Activated T-helper 1 cell treated with anti-CD3 and anti-CD28 coated beads, Interleukin-12 subunit alpha, Interleukin-12 subunit beta, Interleukin-2, Interleukin-4 antibody, amounts not matched to agents 30 ng/mL and 10 ng/mL and 1 ng/mL, durations not matched to agents 14 hours and 24 hours and 36 hours (primary cell): ENCODE measurements at regions of chr3 and their contacts with region 1.

Region 1: DNA sequence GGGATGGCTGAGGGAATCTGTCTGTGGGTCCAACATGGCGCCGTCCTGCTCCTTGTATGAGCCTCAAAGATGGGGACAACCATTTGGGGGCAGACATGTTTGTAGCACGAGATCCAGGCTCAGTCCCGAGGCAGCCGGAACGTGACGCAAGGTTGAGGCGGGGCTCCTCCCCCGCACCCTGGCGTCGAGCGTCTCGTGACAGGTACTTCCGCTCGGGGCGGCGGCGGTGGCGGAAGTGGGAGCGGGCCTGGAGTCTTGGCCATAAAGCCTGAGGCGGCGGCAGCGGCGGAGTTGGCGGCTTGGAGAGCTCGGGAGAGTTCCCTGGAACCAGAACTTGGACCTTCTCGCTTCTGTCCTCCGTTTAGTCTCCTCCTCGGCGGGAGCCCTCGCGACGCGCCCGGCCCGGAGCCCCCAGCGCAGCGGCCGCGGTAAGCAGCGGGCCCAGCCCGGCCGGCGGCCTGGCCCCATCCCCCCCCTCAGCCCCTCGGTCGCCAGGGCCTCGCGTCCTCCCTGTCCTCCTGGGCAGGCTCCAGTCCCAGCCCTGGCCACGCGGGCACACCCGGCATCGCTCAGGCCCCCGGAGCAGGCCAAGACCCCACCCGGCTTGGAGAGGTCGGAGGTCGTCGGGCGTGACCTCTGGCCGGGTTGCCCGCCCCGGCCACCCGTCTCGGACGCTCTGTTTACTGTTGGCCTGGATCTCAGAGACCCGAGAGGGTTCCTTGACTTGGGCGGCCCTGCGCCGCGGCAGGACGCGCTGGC is at the start of gene RAB7A:
- DNase-seq: peak; percentile 94
- H3K4me3 Mint-ChIP-seq: peak within 1 kb of the TSS; percentile 99
- H3K27ac Mint-ChIP-seq: peak within 1 kb of the TSS; percentile 93
- H3K4me1 Mint-ChIP-seq: peaks cover 56% of the 10 kb centered on the region
- H3K27me3 Mint-ChIP-seq: no peaks in the 10 kb centered on the region
- total RNA-seq, gene RAB7A: 318 and 329 TPM in 2 replicates

Region 2: DNA sequence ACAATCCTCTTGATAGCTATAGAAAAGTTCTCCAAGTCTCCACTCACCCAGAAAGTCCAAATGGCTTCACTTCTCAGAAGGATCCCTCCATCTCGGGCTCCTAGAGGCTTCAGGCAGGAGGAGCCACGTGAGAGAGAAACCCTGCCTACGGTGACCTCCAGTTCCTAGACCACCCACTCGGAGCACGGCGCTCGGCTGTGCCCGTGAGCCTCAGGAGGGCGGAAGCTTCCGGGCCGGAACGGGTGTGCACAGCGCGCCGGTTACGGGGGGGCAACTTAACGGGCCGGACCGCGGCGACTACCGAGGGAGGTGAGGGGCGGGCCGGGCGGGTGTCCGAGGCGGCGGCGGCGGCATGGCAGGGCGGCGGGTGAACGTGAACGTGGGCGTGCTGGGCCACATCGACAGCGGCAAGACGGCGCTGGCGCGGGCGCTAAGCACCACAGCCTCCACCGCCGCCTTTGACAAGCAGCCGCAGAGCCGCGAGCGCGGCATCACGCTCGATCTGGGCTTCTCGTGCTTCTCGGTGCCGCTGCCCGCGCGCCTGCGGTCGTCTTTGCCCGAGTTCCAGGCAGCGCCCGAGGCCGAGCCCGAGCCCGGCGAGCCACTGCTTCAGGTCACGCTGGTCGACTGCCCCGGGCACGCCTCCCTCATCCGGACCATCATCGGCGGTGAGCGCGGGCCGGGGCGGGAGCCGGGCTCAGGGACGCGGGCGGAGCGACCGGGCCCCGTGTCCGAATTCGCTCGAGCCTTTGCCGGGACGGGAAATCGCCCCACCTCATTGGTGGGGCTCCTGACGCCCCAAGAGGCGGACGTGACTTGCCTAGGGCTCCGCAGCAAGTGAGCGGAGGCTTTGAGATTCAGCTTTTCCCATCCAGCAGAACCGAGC is 572.7 kb before region 1 on chr3 and contains the start of gene EEFSEC:
- intact Hi-C with region 1: loop called (anchors 5 kb)
- DNase-seq: peak; percentile 82
- H3K4me3 Mint-ChIP-seq: peak within 1 kb of the TSS; percentile 94
- H3K27ac Mint-ChIP-seq: peak within 1 kb of the TSS; percentile 98
- H3K4me1 Mint-ChIP-seq: peaks cover 31% of the 10 kb centered on the region
- H3K27me3 Mint-ChIP-seq: peaks cover 3% of the 10 kb centered on the region
- total RNA-seq, gene EEFSEC: 18.7 and 19.5 TPM in 2 replicates

Region 3: GRCh38 chr3:128680602-128681368 is 45.3 kb before region 1 on chr3:
- intact Hi-C with region 1: loop called (anchors 1 kb)
- DNase-seq: peak; percentile 96
- H3K4me3 Mint-ChIP-seq: peak overlapping the region; percentile 85
- H3K27ac Mint-ChIP-seq: peak overlapping the region; percentile 89
- H3K4me1 Mint-ChIP-seq: peaks cover 29% of the 10 kb centered on the region
- H3K27me3 Mint-ChIP-seq: no peaks in the 10 kb centered on the region

Region 4: DNA sequence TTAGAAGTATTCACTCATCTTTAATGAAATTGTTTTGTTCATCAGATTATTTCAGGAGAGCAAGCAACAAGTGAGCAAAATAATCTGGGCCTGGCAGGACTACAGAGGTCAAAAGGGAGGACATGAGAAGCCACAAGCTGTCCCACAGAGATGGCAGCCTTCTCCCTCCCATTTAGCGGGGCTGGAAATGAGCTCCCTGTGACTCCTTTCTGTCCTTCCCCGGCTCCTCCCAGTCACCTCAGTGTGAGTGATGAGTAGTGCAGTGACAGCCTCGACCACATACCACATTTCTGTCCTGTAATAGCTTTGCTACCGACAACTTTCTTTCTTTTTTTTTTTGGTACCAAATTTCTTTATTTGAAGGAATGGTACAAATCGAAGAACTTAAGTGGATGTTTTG is 37.9 kb after region 1 on chr3:
- intact Hi-C with region 1: loop called (anchors 5 kb)
- DNase-seq: no peak
- H3K4me3 Mint-ChIP-seq: no peak overlapping the region
- H3K27ac Mint-ChIP-seq: peak overlapping the region; percentile 18
- H3K4me1 Mint-ChIP-seq: peaks cover 44% of the 10 kb centered on the region
- H3K27me3 Mint-ChIP-seq: no peaks in the 10 kb centered on the region

Region 5: DNA sequence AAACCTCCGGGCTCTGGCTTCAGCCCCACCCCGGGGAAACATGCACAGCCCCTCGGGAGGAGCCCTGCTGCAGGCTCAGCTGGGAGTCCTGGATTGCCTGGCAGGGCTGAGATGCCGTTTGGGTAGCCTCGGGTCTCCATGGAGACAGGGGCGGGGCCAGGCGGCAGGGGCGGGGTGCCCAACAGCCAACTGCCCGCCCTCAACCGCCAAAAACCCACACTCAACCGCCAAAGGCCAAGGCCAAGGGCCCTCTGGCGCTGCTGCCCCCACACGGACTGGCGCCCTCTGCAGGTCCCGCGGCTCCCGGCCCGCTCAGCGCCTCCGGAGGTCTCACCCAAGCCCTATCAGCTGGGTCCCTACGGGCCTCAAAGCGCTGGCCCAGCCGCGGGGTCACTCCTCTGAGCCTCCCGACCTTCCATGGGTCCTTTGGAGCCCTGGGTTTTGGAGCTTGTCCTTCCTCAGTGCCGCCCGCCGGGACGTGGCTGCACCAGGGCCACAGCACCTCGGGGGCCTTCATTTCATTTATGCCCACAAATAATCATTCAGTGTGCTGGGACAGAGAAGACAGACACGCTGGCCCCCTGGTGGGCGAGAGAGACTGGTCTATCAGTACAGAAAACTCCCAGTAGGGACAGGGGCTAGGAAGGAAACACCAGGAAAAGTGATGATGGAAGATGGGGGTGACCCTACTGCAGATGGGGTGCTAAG is 119.8 kb after region 1 on chr3:
- intact Hi-C with region 1: loop called (anchors 1 kb)
- DNase-seq: peak; percentile 75
- H3K4me3 Mint-ChIP-seq: peak overlapping the region; percentile 77
- H3K27ac Mint-ChIP-seq: peak overlapping the region; percentile 90
- H3K4me1 Mint-ChIP-seq: peaks cover 18% of the 10 kb centered on the region
- H3K27me3 Mint-ChIP-seq: no peaks in the 10 kb centered on the region